Activated B cell treated with CpG ODN at 0.5 μM for 24 hours (primary cell): ENCODE measurements at regions of chr2 and their contacts with region 1.

Region 1: DNA sequence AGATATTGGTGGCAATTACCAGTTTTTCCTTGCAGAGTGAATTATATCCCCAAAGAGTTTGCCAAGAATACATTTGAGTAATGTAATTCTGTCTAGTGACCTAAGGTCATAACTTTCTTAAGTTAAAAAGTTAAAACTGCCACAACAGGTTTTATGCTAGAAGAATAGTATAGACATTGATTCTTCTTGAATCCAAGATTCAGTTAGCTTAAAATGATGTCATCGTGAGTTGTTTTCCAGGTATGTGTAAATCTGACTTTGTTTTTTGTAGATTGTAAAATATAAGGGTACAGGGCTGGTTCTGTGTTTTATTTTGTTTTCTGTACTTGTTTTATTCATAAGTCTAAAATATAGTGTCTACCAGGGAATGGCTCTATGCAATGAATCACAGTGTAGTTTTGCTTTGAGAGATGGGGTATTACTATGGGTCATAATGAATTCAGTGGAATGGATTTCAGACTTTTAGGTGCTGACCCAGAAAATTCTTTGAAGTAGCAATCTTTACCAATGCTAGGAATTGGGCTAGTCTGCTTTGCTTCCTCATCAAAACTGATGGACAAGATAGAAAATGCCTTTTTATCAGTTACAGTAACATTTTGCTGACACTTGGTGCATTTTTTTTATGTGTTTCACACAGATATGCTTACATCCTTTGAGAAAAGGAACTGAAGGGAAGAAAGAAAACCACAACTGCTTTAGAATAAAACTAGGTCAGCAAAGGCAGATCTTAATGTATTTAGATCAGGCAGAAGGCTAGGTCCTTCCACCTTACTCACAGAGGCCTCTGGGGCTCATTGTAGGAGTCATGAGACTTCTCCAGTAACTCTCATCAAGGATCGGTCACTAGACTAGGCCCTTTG is 20.8 kb upstream of the MGAT5 start:
- DNase-seq: no peak
- ATAC-seq: peak; percentile 35
- H3K4me3 Mint-ChIP-seq: peak overlapping the region; percentile 52
- H3K27ac Mint-ChIP-seq: peak overlapping the region; percentile 86
- H3K4me1 Mint-ChIP-seq: peaks cover 90% of the 10 kb centered on the region
- H3K27me3 Mint-ChIP-seq: no peaks in the 10 kb centered on the region
- CTCF ChIP-seq: no peak

Region 2: DNA sequence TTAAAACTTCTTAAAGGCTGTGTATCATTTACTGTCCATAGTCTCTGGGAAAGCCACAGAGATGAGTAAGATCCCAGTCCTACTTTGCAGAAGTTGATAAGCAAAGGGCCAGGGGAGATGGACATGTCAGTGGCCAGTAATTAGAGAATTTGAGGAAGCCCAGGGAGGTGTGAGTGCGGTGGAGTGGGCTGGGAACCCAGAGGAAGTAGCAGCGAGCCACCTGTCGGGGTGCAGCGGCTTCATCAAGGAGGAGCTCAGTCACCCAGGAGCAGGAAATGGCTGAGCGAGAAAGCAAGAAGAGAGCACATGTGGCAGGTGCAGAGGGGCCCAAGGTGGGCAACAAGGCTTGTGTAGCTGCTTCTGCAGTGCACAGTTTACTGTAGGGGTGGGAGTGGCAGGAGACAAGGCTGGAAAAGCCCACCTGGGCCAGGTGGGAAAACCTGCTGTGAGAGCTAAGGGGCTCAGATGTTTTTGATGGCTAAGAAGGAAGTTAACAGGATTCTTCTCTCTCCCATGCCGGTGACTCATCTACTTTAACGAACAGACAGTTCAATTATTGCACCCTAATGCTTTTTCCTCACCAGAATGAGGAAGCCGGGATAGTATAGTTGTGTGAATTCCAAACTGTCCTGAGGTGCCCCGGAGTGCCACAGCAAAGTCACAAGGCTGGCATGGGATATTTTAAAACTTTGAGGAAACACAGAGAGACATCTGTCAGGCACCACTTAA is 14.0 kb before region 1 on chr2:
- CTCF ChIA-PET with region 1: interaction called, 7 read pairs
- POLR2A ChIA-PET with region 1: interaction called, 19 read pairs
- intact Hi-C with region 1: loop called (anchors 1 kb)
- DNase-seq: peak; percentile 38
- ATAC-seq: peak; percentile 66
- H3K4me3 Mint-ChIP-seq: peak overlapping the region; percentile 53
- H3K27ac Mint-ChIP-seq: peak overlapping the region; percentile 89
- H3K4me1 Mint-ChIP-seq: peaks cover 71% of the 10 kb centered on the region
- H3K27me3 Mint-ChIP-seq: no peaks in the 10 kb centered on the region
- CTCF ChIP-seq: no peak

Region 3: GRCh38 chr2:134253804-134254203 is 20.7 kb after region 1 on chr2 and contains the start of gene MGAT5:
- CTCF ChIA-PET with region 1: no interaction called
- POLR2A ChIA-PET with region 1: interaction called, 6 read pairs
- intact Hi-C with region 1: loop called (anchors 2 kb)
- DNase-seq: no peak
- ATAC-seq: peak; percentile 43
- H3K4me3 Mint-ChIP-seq: peak within 1 kb of the TSS; percentile 74
- H3K27ac Mint-ChIP-seq: peak within 1 kb of the TSS; percentile 95
- H3K4me1 Mint-ChIP-seq: peaks cover 95% of the 10 kb centered on the region
- H3K27me3 Mint-ChIP-seq: no peaks in the 10 kb centered on the region
- CTCF ChIP-seq: no peak
- total RNA-seq, gene MGAT5: 66.7 and 69.0 TPM in 2 replicates

Region 4: GRCh38 chr2:134320930-134321329 is 87.8 kb after region 1 on chr2:
- CTCF ChIA-PET with region 1: no interaction called
- POLR2A ChIA-PET with region 1: no interaction called
- intact Hi-C with region 1: no loop called
- DNase-seq: no peak
- ATAC-seq: peak; percentile 36
- H3K4me3 Mint-ChIP-seq: no peak overlapping the region
- H3K27ac Mint-ChIP-seq: peak overlapping the region; percentile 65
- H3K4me1 Mint-ChIP-seq: peaks cover 90% of the 10 kb centered on the region
- H3K27me3 Mint-ChIP-seq: no peaks in the 10 kb centered on the region
- CTCF ChIP-seq: no peak